ENCODE measurements at regions of chr10 and their contacts with region 1.

Region 1: DNA sequence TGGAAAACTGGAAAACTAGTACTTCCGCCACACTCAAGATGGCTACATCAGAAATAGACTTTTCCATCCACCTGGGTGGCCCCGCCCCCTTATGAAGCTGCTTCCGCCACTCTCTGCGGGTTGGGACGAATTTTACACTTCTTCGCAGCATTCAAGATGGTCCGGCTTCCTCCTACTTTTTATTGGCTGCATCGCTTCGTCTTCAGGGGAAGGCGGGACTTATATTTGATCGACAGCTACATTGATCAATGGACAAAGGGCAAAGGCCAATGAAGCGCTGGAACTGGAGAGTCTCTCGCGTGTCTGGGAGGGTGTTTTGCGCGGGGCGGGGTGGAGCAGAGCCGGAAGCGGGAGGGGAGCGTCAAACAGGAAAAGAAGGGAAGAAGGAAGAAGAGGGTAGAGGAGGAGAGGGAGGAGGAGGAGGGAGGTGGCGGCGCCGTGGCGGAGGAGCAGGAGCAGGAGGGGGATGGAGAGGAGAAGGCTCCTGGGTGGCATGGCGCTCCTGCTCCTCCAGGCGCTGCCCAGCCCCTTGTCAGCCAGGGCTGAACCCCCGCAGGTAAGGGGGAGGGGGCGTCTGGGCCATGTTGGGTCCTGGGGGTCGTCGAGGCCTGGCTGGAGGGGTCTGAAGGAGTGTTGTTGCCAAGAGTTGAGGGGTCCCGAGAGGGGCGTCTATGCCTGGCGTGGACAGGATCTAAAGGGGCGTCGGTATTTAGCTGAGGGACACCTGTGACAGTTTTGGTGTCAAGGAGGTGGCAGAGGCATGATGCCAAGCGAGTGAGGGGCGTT is at the start of gene WBP1L:
- DNase-seq: peak; percentile 99
- H3K4me3 ChIP-seq: peak within 1 kb of the TSS; percentile 96
- H3K27ac ChIP-seq: peak within 1 kb of the TSS; percentile 34
- H3K4me1 ChIP-seq: peaks cover 25% of the 10 kb centered on the region
- CTCF ChIP-seq: no peak
- total RNA-seq, gene WBP1L: 12.5 and 17.6 TPM in 2 replicates

Region 2: GRCh38 chr10:102720775-102721301 is 22.9 kb before region 1 on chr10:
- CTCF ChIA-PET with region 1: no interaction called
- POLR2A ChIA-PET with region 1: interaction called, 11 read pairs
- intact Hi-C with region 1: no loop called
- DNase-seq: no peak
- H3K4me3 ChIP-seq: no peak overlapping the region
- H3K27ac ChIP-seq: no peak overlapping the region
- H3K4me1 ChIP-seq: peaks cover 28% of the 10 kb centered on the region
- CTCF ChIP-seq: no peak

Region 3: GRCh38 chr10:102814873-102815661 is 71.3 kb after region 1 on chr10:
- CTCF ChIA-PET with region 1: no interaction called
- POLR2A ChIA-PET with region 1: no interaction called
- intact Hi-C with region 1: loop called (anchors 5 kb)
- DNase-seq: no peak
- H3K4me3 ChIP-seq: no peak overlapping the region
- H3K27ac ChIP-seq: peak overlapping the region; percentile 74
- H3K4me1 ChIP-seq: peaks cover 52% of the 10 kb centered on the region
- CTCF ChIP-seq: no peak

Region 4: GRCh38 chr10:103350501-103351260 is 606.9 kb after region 1 on chr10 and contains the start of gene PCGF6:
- CTCF ChIA-PET with region 1: no interaction called
- POLR2A ChIA-PET with region 1: no interaction called
- intact Hi-C with region 1: no loop called
- DNase-seq: peak; percentile 90
- H3K4me3 ChIP-seq: peak within 1 kb of the TSS; percentile 79
- H3K27ac ChIP-seq: peak within 1 kb of the TSS; percentile 46
- H3K4me1 ChIP-seq: peaks cover 18% of the 10 kb centered on the region
- CTCF ChIP-seq: no peak
- total RNA-seq, gene PCGF6: 14.9 and 16.0 TPM in 2 replicates

Measured in OCI-LY7 (cell line).